Activated CD4-positive, alpha-beta T cell treated with anti-CD3 and anti-CD28 coated beads, Interleukin-2, amount 10 ng/mL, durations not matched to agents 24 days and 14 days (primary cell): ENCODE measurements at regions of chrX and their contacts with region 1.

Region 1: DNA sequence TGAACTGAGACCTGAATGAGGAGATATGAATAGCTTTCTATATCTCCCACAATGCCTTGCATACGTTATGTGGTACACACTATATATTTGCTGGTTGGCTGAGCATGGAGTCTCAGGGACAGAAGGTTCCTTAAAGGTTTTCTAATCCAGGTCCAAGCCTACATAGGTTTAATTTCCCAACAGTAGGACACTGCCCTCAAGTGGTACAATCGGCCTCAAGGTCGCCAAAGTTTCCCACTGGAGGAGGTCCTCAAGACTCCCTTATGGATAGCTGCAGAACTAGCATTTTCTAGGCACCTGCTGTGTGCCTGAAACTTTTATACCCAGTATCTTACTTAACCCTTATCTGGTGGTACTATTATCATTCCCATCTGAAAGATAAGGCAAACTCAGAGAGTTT is 21.0 kb upstream of the EFNB1 start:
- DNase-seq: no peak
- H3K4me3 Mint-ChIP-seq: no peak overlapping the region
- H3K27ac Mint-ChIP-seq: no peak overlapping the region
- H3K4me1 Mint-ChIP-seq: no peaks in the 10 kb centered on the region
- H3K27me3 Mint-ChIP-seq: peaks cover 7% of the 10 kb centered on the region

Region 2: DNA sequence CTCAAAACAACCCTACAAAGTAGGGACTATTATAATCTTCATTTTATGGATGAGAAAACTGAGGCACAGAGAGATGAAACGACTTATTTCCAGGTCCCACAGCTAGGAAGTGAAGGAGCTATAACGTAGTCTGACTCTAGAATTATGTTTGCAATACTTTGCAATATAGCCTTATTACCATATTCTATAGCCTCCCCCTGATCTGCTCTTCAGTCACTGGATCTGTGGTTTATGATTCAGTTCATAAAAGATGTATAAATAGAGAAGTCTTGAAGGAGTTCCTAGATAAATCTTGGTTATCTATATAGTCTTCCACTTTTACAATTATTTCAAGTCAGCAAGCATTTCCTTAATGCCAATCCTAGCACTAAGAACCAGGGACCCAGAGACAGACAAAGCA is 432.0 kb before region 1 on chrX:
- intact Hi-C with region 1: no loop called
- DNase-seq: no peak
- H3K4me3 Mint-ChIP-seq: no peak overlapping the region
- H3K27ac Mint-ChIP-seq: no peak overlapping the region
- H3K4me1 Mint-ChIP-seq: no peaks in the 10 kb centered on the region
- H3K27me3 Mint-ChIP-seq: no peaks in the 10 kb centered on the region

Region 3: DNA sequence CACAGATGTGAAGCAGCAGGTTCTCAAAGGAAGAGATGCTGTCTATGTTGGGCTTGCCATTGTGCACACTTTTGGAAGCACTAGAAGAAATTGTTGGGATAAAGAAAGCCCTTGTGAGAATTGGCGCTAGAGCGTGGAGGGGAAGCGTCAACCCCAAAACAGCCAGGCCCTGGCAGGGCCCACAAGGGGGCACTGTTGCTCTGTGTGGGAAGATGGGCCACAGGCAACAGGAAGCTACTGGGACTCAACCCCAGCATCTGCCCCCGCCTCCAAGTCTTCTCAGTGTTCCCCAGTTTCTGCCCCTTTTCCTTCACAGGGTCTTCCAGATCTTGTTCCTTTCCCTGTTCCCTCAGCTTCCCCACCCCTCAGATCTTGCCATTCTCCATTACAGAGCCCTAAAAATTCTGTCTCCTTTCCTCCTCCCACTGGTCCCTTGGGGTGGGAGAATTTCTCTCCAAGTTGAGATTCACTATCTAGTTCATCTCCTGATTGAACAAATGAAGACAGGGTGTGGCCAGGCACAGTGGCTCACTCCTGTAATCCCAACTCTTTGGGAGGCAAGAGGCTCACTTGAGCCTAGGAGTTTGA is 74.8 kb before region 1 on chrX:
- intact Hi-C with region 1: loop called (anchors 5 kb)
- DNase-seq: peak; percentile 89
- H3K4me3 Mint-ChIP-seq: no peak overlapping the region
- H3K27ac Mint-ChIP-seq: no peak overlapping the region
- H3K4me1 Mint-ChIP-seq: peaks cover 2% of the 10 kb centered on the region
- H3K27me3 Mint-ChIP-seq: peaks cover 2% of the 10 kb centered on the region

Region 4: GRCh38 chrX:68842781-68843581 is 35.2 kb after region 1 on chrX:
- intact Hi-C with region 1: no loop called
- DNase-seq: no peak
- H3K4me3 Mint-ChIP-seq: no peak overlapping the region
- H3K27ac Mint-ChIP-seq: no peak overlapping the region
- H3K4me1 Mint-ChIP-seq: no peaks in the 10 kb centered on the region
- H3K27me3 Mint-ChIP-seq: no peaks in the 10 kb centered on the region

Region 5: GRCh38 chrX:69060631-69061408 is 253.0 kb after region 1 on chrX:
- intact Hi-C with region 1: no loop called
- DNase-seq: no peak
- H3K4me3 Mint-ChIP-seq: no peak overlapping the region
- H3K27ac Mint-ChIP-seq: no peak overlapping the region
- H3K4me1 Mint-ChIP-seq: no peaks in the 10 kb centered on the region
- H3K27me3 Mint-ChIP-seq: no peaks in the 10 kb centered on the region